HEK293 (cell line): ENCODE measurements at regions of chr11 and their contacts with region 1.

Region 1: DNA sequence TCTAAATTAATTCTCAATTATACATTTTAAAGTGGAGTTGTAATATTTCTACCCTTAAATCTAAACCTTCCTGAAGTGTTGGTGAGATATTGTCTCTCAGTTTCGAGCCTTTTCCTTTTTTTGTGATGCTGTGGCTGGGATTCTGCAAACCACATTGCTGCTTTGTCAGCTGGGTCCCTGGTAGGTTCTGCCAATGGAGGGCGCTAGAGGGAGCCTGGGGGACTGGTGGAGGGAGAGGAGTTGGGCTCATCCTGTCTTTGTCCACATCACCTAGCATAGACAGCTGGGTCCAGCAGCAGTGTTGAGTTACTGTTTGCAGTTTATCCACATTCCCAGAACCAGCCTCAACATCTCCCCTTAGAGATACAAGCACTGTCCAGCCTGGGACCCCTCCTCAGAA is 41.0 kb downstream of the TRAF6 start:
- H3K4me3 ChIP-seq: no peak overlapping the region
- H3K27ac ChIP-seq: no peak overlapping the region
- H3K4me1 ChIP-seq: no peaks in the 10 kb centered on the region
- CTCF ChIP-seq: no peak

Region 2: GRCh38 chr11:36289226-36289852 is 179.7 kb before region 1 on chr11 and contains the start of gene COMMD9:
- CTCF ChIA-PET with region 1: interaction called, 247 read pairs
- POLR2A ChIA-PET with region 1: interaction called, 3 read pairs
- H3K4me3 ChIP-seq: peak within 1 kb of the TSS; percentile 87
- H3K27ac ChIP-seq: no peak within 1 kb of the TSS
- H3K4me1 ChIP-seq: no peaks in the 10 kb centered on the region
- CTCF ChIP-seq: no peak

Region 3: DNA sequence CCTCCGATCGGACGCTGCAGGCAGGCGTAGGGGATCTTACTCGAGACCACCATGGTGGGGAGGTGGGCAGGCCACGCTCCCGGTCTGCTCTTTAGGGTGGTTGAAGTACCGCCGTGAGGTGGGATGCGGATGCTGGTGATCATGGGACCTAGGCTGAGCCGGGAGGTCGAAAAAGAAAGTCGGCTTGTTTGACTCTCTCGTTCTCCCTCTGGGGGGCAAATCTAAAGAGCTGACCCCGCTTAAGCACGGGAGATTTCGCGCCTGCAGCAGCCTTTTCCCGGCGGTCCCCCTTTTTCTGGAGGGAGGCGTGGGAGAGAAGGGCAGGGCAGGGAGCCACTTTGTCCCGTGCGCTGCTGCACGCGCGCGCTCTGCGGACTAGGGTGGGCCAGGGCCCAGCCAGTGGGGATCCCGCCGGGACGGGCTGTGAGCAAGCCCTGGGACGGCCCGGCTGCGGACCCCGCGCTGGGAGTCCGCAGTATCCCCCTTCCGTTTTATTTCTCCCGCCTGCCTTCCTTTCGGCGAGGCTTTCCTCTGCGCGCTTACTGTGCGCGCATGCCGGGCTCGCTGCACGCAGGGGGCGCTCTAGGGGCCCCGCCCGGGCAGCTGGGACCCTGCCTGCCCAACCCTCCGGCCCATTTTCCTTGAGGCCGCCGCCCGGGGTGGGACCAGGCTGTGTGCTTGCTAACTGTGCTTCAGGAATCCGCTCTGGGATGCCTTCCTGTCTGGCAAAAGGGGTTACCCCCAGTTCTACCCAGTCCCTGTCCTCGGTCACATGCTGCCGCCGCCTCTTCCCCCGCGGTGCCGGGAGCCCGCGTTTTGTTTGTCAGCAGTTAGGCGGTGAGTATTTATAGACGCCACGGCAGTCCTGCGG is 91.9 kb before region 1 on chr11:
- CTCF ChIA-PET with region 1: interaction called, 14 read pairs
- POLR2A ChIA-PET with region 1: interaction called, 20 read pairs
- H3K4me3 ChIP-seq: peak overlapping the region; percentile 58
- H3K27ac ChIP-seq: no peak overlapping the region; the same call in 1 of the 2 replicates
- H3K4me1 ChIP-seq: no peaks in the 10 kb centered on the region
- CTCF ChIP-seq: peak; percentile 78

Region 4: DNA sequence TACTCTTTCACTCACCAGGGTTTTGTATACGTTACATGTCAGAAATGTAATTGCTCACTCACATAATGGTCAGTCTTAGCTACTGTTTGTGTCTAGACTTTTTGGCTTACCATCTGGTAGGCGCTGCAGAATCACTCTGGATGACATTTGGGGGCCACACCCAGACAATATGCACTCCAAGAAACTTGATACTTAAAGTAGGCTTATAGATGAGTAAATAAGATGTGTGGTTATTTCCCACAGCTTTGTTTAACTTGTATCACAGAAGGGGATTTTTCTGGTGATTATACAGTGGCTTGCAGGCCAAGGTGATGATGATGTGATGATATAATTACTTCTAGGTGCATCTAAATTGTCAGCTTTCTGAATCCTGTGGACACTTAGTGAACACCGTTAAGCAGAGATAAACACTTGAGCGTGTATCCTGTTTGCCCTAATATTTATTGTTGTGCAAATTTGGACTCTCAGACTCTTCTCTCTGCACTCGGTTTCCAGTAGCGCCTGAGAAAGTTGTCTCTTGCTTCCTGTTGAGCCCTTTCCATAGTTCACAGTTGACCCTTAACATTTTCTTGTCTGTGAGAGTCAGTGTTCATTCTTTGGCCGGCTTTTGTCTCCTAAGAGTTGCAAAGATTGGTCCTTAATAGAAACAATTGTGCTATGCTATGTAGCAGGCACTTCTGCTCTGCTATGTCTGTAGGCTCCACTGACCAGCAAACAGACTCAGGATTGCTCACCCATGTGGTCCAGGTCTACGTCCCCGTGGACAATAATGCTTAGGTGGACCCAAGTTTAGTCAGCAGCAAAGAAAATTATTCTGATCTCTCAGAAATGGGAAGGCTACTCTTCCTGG is 83.7 kb before region 1 on chr11:
- CTCF ChIA-PET with region 1: interaction called, 17 read pairs
- POLR2A ChIA-PET with region 1: interaction called, 9 read pairs
- H3K4me3 ChIP-seq: no peak overlapping the region
- H3K27ac ChIP-seq: peak overlapping the region; percentile 48
- H3K4me1 ChIP-seq: no peaks in the 10 kb centered on the region
- CTCF ChIP-seq: no peak

Region 5: DNA sequence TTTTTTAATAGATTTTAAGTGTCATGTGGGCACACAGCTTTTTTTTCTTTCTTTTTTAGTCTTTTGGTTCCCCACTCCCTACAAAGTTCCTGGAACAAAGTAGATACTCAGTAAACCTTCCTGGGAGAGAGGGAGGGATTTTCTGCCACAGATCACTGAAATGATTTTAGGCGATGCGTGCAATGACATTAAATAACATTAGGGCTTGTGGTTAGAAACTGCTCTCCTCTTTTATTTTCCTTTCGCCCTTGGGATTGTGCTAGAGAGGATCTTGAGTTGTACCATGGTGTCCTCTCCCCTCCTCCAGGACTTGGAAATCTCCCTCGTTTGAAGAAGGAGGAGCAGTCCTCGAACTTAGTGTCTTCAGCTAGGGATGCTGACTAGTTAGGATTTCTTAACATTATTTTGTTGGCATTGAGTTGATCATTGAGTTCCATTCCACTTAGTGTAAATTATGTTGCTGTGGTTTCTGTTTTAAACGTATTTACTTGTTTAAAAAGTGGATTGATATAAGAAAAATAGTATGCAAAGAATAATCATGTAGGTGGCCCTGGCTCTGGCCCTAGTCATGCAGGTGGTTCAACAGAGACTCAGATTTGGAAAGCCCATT is 47.4 kb before region 1 on chr11:
- CTCF ChIA-PET with region 1: interaction called, 7 read pairs
- POLR2A ChIA-PET with region 1: interaction called, 12 read pairs
- H3K4me3 ChIP-seq: no peak overlapping the region
- H3K27ac ChIP-seq: no peak overlapping the region
- H3K4me1 ChIP-seq: no peaks in the 10 kb centered on the region
- CTCF ChIP-seq: no peak

Region 6: DNA sequence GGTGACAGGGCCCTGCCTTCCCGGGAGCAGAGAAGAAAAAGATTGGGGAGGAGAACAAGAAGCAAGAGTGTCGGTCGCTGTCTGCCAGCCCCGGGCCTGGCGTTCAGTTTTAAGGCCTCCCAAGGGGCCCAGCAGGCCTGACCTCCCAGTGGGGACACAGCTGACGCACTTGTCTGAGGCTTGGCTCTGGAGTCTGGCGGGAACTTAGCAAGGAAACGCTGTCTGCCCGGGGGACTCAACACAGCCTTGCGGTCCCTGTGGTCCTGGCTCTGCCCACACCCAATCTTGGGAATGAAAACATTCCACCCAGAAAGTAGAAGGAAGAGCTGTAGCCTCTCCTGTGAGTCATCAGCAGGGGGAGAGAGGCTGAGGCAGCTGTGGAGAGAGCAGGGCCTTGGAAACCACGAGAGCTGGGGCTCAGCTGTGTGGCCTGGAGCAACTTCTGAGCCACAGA is 13.4 kb before region 1 on chr11:
- CTCF ChIA-PET with region 1: interaction called, 26 read pairs
- POLR2A ChIA-PET with region 1: interaction called, 33 read pairs
- H3K4me3 ChIP-seq: no peak overlapping the region
- H3K27ac ChIP-seq: peak overlapping the region; percentile 74
- H3K4me1 ChIP-seq: peaks cover 5% of the 10 kb centered on the region; the same call in 1 of the 2 replicates
- CTCF ChIP-seq: no peak